Pancreas (tissue), 10 donors: ENCODE measurements at regions of chr19 and their contacts with region 1.

Region 1: DNA sequence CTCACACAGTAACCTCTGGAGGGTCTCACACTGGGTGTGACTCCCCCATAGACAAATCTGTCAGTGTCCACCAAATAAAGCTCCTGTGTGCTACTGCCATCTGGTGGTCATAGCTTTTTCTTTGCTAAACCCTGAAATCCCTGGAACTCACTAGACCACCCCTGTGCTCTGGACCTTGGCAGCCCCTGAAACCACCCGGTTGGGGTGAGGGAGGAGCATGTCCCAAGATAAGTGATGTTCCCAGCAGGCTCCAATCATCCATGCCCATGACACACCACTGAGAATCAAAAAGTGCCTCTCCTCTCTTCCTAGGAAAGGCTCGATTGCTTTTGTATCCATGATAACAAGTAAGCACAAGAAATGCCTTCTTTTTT is 6.5 kb upstream of the HSD17B14 start:
- DNase-seq: peak in 2 of 6 donors; percentile 17 to 53
- ATAC-seq: peak; percentile 59 to 81 (median 74)
- H3K4me3 ChIP-seq: no peak overlapping the region
- H3K27ac ChIP-seq: no peak overlapping the region
- H3K4me1 ChIP-seq: no peaks in the 10 kb centered on the region
- H3K27me3 ChIP-seq: no peaks in the 10 kb centered on the region
- CTCF ChIP-seq: peak; percentile 43 to 76 (median 69)

Region 2: DNA sequence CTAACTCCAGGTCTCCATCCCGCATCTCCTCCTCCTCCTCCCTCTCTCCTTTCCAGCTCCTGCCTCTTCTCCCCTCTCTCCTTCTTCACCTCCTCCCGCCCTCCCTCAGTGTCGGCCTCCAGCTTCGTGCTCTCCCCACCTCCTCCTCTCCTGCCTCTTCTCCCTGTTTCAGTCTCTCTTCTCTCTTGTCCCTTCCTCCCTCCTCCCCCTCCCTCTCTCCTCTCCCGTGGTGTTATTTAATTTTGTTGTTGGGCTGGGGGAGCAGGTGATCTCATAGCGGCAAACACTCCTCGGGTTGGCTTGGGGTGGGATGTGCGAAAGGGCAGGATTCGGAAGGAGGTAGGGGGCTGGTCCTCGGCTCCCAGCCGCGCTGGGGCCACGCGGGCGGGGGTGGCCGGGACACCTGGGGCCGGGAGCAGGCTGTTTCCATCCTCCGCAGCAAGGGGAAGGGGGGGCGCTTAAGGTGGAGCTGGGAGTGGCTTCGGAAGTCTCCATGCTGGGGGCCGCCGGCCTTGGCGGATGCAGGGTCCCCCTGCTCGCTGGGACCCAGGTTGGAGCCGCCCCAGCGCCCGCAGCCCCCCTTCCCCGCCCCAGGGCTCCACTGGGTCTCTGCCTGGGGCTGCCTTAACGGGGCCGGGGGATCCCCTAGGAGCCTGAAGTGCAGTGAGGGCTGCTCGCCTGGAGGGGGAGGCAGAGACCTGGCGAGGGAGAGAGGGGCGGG is 196.6 kb before region 1 on chr19 and contains the start of gene CA11:
- intact Hi-C with region 1: loop called in 2 of 3 experiments (anchors 10 kb)
- DNase-seq: peak; percentile 88 to 97 (median 92)
- ATAC-seq: peak; percentile 88 to 95 (median 91)
- H3K4me3 ChIP-seq: peak within 1 kb of the TSS; percentile 15 to 52 (median 36)
- H3K27ac ChIP-seq: peak within 1 kb of the TSS; percentile 56 to 86 (median 79)
- H3K4me1 ChIP-seq: peaks cover 0 to 3% (median 0%) of the 10 kb centered on the region in 3 donors
- H3K27me3 ChIP-seq: no peaks in the 10 kb centered on the region
- CTCF ChIP-seq: peak; percentile 73 to 86 (median 84)
- total RNA-seq, gene CA11: 2.6 to 6.2 (median 4.5) TPM